BJ (cell line): ENCODE measurements at regions of chr17 and their contacts with region 1.

Region 1: DNA sequence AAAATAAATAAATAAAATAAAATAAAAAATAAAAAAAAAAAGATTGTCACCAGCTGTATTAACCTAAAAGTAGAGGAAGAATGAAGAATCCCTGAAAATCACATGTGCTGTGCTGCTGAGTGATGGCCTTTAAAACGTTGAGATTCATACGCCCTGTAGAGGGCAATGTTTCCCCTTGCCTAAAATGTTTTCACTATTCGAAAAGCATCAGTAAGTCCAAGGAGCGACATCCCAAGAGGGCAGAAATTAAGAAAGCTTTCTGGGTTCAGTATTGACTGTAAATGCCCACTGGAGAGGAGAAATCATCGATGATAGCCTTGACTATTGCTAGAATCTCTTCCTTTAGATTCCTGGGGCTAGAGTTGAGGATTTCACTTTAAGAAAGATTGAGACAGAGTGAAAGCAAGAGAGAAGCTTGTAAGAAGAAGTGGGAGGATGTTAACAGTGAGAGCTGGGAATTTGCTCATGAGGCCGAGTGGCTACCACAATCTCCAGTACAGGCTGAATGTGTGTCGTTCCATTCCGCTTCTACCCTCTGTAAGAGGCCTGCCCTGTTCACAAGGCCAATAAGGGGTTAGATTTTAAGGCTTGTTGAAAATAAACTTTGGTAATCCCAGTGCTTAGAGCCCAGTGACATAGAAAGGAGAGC is 170.8 kb upstream of the FAM20A start:
- DNase-seq: peak; percentile 15
- H3K4me3 ChIP-seq: no peak overlapping the region
- H3K27me3 ChIP-seq: no peaks in the 10 kb centered on the region
- CTCF ChIP-seq: peak; percentile 75

Region 2: GRCh38 chr17:68759343-68760132 is 12.5 kb before region 1 on chr17:
- CTCF ChIA-PET with region 1: interaction called, 10 read pairs
- POLR2A ChIA-PET with region 1: no interaction called
- DNase-seq: peak; percentile 56
- H3K4me3 ChIP-seq: peak overlapping the region; percentile 34
- H3K27me3 ChIP-seq: no peaks in the 10 kb centered on the region
- CTCF ChIP-seq: peak; percentile 95

Region 3: GRCh38 chr17:68972119-68972704 is 200.2 kb after region 1 on chr17:
- CTCF ChIA-PET with region 1: interaction called, 43 read pairs
- POLR2A ChIA-PET with region 1: no interaction called
- DNase-seq: no peak
- H3K4me3 ChIP-seq: no peak overlapping the region
- H3K27me3 ChIP-seq: no peaks in the 10 kb centered on the region
- CTCF ChIP-seq: peak; percentile 66

Region 4: DNA sequence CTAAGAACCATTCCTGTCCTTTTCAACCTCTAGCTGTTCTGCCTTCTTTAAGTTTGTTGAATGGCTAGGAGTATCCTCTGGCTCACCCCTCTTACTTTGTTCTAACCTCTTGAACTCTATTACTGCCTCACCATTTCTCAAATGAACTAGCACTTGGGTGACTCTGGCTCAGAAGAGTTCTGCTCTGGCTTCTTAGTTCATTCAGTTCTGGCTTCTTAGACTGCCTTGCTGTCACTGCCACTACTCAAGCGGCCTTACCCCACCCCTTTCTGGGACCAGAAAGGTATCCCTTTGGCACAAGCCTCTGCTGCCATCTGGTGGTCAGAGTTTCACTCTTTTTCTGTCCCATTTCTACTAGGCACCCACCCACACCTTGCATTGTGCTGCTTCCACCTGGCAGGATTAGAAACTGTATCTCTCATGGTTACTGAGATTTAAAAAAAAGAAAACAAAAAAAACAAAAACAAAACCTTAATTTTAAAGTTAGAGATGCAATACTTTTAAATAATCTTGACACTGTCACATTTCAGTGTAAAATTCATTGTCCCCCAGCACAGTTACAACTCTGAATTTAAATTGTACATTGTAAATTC is 463.4 kb after region 1 on chr17:
- CTCF ChIA-PET with region 1: interaction called, 16 read pairs
- POLR2A ChIA-PET with region 1: no interaction called
- DNase-seq: no peak
- H3K4me3 ChIP-seq: no peak overlapping the region
- H3K27me3 ChIP-seq: no peaks in the 10 kb centered on the region
- CTCF ChIP-seq: peak; percentile 78

Region 5: GRCh38 chr17:69246726-69247375 is 474.9 kb after region 1 on chr17:
- CTCF ChIA-PET with region 1: interaction called, 44 read pairs
- POLR2A ChIA-PET with region 1: no interaction called
- DNase-seq: no peak
- H3K4me3 ChIP-seq: no peak overlapping the region
- H3K27me3 ChIP-seq: no peaks in the 10 kb centered on the region
- CTCF ChIP-seq: peak; percentile 53

Region 6: GRCh38 chr17:69819316-69820087 is 1047.5 kb after region 1 on chr17:
- CTCF ChIA-PET with region 1: no interaction called
- POLR2A ChIA-PET with region 1: interaction called, 12 read pairs
- DNase-seq: peak; percentile 16
- H3K4me3 ChIP-seq: no peak overlapping the region
- H3K27me3 ChIP-seq: peaks cover 3% of the 10 kb centered on the region
- CTCF ChIP-seq: no peak